ENCODE measurements at regions of chr3 and their contacts with region 1.

Region 1: GRCh38 chr3:30676424-30677346 is 70.3 kb downstream of the TGFBR2 start:
- DNase-seq: no peak
- ATAC-seq: peak; percentile 54
- H3K4me3 Mint-ChIP-seq: peak overlapping the region; percentile 3
- H3K27ac Mint-ChIP-seq: peak overlapping the region; percentile 84
- H3K4me1 Mint-ChIP-seq: peaks cover 87% of the 10 kb centered on the region
- H3K27me3 Mint-ChIP-seq: no peaks in the 10 kb centered on the region
- CTCF ChIP-seq: no peak

Region 2: DNA sequence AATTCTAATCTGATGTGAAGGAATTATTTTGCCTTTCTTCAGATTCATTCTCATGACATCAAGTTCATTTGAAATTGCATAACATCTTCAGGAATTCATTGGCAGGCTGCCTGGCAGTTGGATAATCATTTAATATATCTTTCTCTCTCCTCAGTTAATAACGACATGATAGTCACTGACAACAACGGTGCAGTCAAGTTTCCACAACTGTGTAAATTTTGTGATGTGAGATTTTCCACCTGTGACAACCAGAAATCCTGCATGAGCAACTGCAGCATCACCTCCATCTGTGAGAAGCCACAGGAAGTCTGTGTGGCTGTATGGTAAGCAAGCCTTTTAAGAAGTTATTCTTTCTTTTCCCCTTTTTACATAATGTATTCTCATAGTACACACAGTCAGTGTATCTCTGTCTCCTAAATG is 32.1 kb before region 1 on chr3:
- CTCF ChIA-PET with region 1: no interaction called
- POLR2A ChIA-PET with region 1: interaction called, 9 read pairs
- intact Hi-C with region 1: loop called (anchors 5 kb)
- DNase-seq: no peak
- ATAC-seq: peak; percentile 38
- H3K4me3 Mint-ChIP-seq: peak overlapping the region; percentile 68
- H3K27ac Mint-ChIP-seq: peak overlapping the region; percentile 91
- H3K4me1 Mint-ChIP-seq: peaks cover 98% of the 10 kb centered on the region
- H3K27me3 Mint-ChIP-seq: no peaks in the 10 kb centered on the region
- CTCF ChIP-seq: no peak

Region 3: GRCh38 chr3:30720586-30721313 is 44.1 kb after region 1 on chr3:
- CTCF ChIA-PET with region 1: no interaction called
- POLR2A ChIA-PET with region 1: no interaction called
- intact Hi-C with region 1: no loop called
- DNase-seq: no peak
- ATAC-seq: no peak
- H3K4me3 Mint-ChIP-seq: no peak overlapping the region
- H3K27ac Mint-ChIP-seq: no peak overlapping the region
- H3K4me1 Mint-ChIP-seq: peaks cover 12% of the 10 kb centered on the region
- H3K27me3 Mint-ChIP-seq: peaks cover 8% of the 10 kb centered on the region
- CTCF ChIP-seq: no peak

Region 4: DNA sequence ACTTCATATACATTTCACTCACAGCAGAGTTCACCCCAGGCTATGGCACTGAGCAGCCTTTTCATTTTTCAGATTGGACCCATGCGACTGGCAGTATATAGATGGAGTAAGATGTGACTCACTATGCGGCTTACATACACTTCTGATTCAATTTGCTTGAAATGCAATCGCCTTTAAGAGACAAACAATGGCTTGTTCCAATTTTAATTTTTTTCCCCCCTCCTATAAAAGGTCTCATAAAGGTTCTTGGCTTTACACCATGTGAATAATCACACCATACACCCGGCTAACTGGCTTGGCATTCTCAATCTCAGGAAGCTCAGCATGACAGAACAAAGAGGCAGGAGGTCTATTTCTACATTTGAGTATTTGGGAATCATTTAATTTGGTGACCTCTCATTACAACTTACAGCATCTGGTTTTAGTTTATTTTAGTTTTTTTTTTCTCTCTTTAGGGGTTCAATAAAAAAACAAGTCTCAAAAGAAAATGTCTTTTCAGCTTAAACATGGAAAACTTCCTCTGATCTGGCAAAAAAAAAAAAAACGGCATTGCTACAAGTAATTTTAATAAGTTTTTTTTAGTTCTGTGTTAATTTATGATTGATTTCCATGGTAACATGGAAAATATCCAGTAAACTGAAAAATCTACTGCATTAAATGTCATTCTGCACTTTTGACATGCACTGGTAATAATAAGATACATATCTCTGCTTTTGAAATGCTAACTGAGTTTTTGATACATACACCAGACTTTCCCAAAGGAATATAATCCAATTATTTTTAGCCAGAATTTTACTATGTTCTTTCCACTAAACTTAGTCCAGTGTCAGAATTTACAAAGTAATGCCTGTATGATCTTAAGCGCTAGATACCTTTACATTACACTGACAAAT is 179.0 kb after region 1 on chr3:
- CTCF ChIA-PET with region 1: no interaction called
- POLR2A ChIA-PET with region 1: no interaction called
- intact Hi-C with region 1: no loop called
- DNase-seq: no peak
- ATAC-seq: no peak
- H3K4me3 Mint-ChIP-seq: no peak overlapping the region
- H3K27ac Mint-ChIP-seq: no peak overlapping the region
- H3K4me1 Mint-ChIP-seq: no peaks in the 10 kb centered on the region
- H3K27me3 Mint-ChIP-seq: peaks cover 1% of the 10 kb centered on the region
- CTCF ChIP-seq: no peak